Right lobe of liver (tissue), 6 donors: ENCODE measurements at regions of chr1 and their contacts with region 1.

Region 1: GRCh38 chr1:222794656-222795474 is 20.0 kb upstream of the DISP1 start:
- DNase-seq: peak; percentile 25 to 83 (median 71)
- ATAC-seq: peak; percentile 37 to 93 (median 72)
- H3K4me3 ChIP-seq: no peak overlapping the region
- H3K27ac ChIP-seq: no peak overlapping the region
- H3K4me1 ChIP-seq: peaks cover 0 to 8% (median 2%) of the 10 kb centered on the region in 4 donors
- H3K27me3 ChIP-seq: no peaks in the 10 kb centered on the region
- CTCF ChIP-seq: peak in 3 of 4 donors; percentile 12 to 39 (median 28)
- POLR2A ChIP-seq: no peak

Region 2: GRCh38 chr1:222589462-222590302 is 205.2 kb before region 1 on chr1 and contains the start of gene TAF1A:
- intact Hi-C with region 1: no loop called
- DNase-seq: peak; percentile 89 to 93 (median 92)
- ATAC-seq: peak; percentile 98 to 99 (median 99)
- H3K4me3 ChIP-seq: peak within 1 kb of the TSS; percentile 65 to 77 (median 67)
- H3K27ac ChIP-seq: peak within 1 kb of the TSS; percentile 84 to 90 (median 87)
- H3K4me1 ChIP-seq: peaks cover 0 to 12% (median 4%) of the 10 kb centered on the region in 4 donors
- H3K27me3 ChIP-seq: no peaks in the 10 kb centered on the region
- CTCF ChIP-seq: no peak
- POLR2A ChIP-seq: peak; percentile 68
- total RNA-seq, gene TAF1A: 2.1 to 7.5 (median 2.5) TPM

Region 3: DNA sequence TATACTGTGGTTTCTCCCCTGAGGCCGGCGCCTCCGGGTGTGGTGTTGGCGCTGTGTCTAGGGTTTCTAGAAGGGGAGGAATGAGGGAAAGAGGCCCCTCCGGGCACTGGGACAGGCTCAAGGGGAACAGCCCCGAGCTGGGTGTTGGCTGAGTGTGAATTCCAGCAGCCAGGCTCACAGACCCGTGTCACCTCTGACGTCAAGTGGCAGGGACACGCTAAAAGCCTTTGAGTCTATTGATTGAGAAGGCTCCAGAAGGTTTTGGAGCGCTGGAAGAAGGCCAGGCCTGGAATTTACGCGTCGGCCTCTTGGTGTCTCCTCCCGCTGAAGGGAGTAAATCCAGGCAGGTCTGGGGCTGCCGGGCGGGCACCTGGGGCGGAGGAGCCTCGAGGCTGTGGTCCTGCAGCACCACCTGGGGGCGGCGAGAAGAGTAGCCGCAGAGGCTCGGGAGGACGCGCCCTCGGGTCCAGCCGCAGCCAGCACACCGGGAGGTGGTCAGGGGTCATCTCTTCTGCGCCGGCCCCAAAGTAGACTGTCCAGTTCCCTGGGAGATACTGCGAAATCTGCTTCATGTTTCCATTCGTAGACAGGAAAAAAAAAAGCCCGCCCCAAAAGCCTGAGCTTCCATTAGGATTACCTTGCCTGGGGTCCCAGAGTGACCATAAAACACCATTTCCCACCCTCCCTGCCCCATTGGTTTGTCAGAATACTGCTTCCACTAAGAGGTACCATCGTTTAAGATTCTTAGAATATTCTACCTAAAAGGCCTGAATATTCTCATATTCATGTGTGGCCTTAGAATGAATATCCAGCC is 286.5 kb after region 1 on chr1:
- intact Hi-C with region 1: loop called in 1 of 2 experiments (anchors 5 kb)
- DNase-seq: peak; percentile 91 to 97 (median 95)
- ATAC-seq: peak; percentile 97 to 99 (median 98)
- H3K4me3 ChIP-seq: peak overlapping the region; percentile 19 to 33 (median 30)
- H3K27ac ChIP-seq: peak overlapping the region; percentile 75 to 92 (median 87)
- H3K4me1 ChIP-seq: peaks cover 0 to 11% (median 5%) of the 10 kb centered on the region in 4 donors
- H3K27me3 ChIP-seq: no peaks in the 10 kb centered on the region
- CTCF ChIP-seq: peak; percentile 94 to 98 (median 98)
- POLR2A ChIP-seq: no peak